HCT116 (cell line): ENCODE measurements at regions of chr6 and their contacts with region 1.

Region 1: GRCh38 chr6:42532038-42532669 is 31.7 kb upstream of the UBR2 start:
- DNase-seq: peak; percentile 79
- ATAC-seq: peak; percentile 96
- H3K4me3 ChIP-seq: no peak overlapping the region
- H3K27ac ChIP-seq: no peak overlapping the region
- H3K4me1 ChIP-seq: no peaks in the 10 kb centered on the region
- H3K27me3 ChIP-seq: no peaks in the 10 kb centered on the region
- CTCF ChIP-seq: peak; percentile 85 to 95 (median 93)
- POLR2A ChIP-seq: no peak
- RAD21 ChIP-seq: peak; percentile 81

Region 2: DNA sequence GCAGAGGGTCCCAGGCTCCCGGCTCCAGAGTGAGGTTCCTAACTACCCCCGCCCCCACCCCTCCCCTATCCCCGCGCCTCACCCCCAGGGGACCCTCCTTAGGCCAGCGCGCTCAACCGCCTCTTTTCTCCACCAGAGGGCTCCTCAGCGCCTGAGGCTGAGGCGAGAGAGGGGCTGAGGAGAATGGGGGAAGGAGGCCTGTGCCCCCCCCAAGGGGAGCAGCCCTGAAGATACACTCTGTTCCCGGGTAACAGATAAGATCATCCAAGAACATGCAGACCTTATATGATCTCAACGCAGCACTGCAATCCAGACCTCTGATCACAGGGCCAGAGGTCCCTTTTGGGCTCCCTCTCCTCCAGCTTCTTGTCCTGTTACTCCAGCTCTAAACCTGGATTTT is 271.2 kb before region 1 on chr6:
- CTCF ChIA-PET with region 1: interaction called, 13 read pairs
- POLR2A ChIA-PET with region 1: no interaction called
- RAD21 ChIA-PET with region 1: no interaction called
- intact Hi-C with region 1: loop called (anchors 5 kb)
- DNase-seq: no peak
- ATAC-seq: peak; percentile 84
- H3K4me3 ChIP-seq: peak overlapping the region; percentile 60 to 62
- H3K27ac ChIP-seq: peak overlapping the region; percentile 56
- H3K4me1 ChIP-seq: peaks cover 8 to 23% of the 10 kb centered on the region in 2 experiments; a peak in 3 of 4 replicates
- H3K27me3 ChIP-seq: no peaks in the 10 kb centered on the region
- CTCF ChIP-seq: peak; percentile 50 to 62 (median 58); a peak in 4 of 6 replicates
- POLR2A ChIP-seq: no peak
- RAD21 ChIP-seq: peak; percentile 76

Region 3: DNA sequence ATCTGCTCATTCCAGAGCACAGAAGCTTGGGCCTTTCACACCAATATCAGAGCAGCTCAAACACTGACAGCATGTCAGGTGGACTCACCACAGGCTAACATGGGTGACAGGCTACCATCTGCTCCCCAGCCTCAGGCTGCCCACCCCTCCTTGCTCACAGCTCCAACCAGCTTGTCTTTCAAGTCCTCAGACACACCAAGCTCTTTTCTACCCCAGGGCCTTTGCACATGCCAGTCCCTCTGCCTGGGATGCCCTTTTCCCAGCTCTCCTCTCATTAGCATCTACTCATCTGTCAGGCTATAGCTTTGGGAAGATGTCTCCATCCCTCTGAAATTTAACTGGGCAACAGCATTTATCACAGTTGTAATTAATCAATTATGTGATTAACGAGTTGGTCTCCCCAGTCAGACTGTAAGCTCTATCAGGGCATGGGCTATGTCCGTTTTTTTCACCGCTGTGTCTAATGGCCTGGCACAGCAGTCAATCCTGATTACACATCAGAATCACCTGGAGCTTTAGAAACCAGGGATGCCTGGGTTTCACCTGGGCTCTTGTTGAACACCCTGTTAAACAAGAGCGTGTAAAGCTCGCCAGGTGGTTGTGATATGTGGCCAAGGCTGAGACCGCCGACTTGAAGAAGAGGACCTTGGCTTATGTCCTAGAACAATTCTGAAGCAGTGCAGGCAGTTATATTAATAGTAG is 225.6 kb before region 1 on chr6:
- CTCF ChIA-PET with region 1: no interaction called
- POLR2A ChIA-PET with region 1: no interaction called
- RAD21 ChIA-PET with region 1: no interaction called
- intact Hi-C with region 1: loop called (anchors 5 kb)
- DNase-seq: no peak
- ATAC-seq: no peak
- H3K4me3 ChIP-seq: no peak overlapping the region
- H3K27ac ChIP-seq: no peak overlapping the region
- H3K4me1 ChIP-seq: peaks cover 0 to 14% of the 10 kb centered on the region in 2 experiments; a peak in 2 of 4 replicates
- H3K27me3 ChIP-seq: no peaks in the 10 kb centered on the region
- CTCF ChIP-seq: no peak
- POLR2A ChIP-seq: no peak
- RAD21 ChIP-seq: no peak